PC-9 (cell line): ENCODE measurements at regions of chr17 and their contacts with region 1.

Region 1: DNA sequence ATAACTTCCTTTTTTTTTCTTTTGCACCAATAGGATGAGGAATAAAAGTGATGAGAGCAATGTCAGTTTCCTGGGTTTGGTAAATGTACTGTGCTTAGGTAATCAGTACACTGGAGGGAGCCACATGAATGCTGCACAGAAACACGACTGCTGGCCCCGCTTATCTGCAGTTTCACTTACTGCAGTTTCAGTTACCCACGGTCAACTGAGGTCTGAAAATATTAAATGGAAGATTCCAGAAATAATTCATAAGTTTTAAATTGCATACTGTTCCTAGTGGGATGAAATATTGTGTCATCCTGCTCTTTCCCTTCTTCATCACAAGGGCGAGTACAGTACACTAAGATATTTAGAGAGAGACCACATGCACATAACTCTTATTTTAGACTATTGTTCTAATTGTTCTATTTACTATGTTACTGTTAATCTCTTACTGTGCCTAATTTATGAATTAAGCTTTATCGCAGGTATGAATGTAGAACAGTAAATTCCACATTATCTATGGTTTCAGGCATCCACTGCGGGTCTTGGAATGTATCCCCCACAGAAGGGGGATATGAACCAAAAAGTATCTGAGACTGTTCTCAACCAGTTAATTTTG is 6.4 kb upstream of the LGALS3BP start:
- DNase-seq: no peak
- H3K4me3 ChIP-seq: peak overlapping the region; percentile 48; the same call in 1 of the 2 replicates
- H3K27ac ChIP-seq: peak overlapping the region; percentile 88
- H3K4me1 ChIP-seq: peaks cover 30% of the 10 kb centered on the region
- H3K27me3 ChIP-seq: no peaks in the 10 kb centered on the region
- CTCF ChIP-seq: no peak

Region 2: DNA sequence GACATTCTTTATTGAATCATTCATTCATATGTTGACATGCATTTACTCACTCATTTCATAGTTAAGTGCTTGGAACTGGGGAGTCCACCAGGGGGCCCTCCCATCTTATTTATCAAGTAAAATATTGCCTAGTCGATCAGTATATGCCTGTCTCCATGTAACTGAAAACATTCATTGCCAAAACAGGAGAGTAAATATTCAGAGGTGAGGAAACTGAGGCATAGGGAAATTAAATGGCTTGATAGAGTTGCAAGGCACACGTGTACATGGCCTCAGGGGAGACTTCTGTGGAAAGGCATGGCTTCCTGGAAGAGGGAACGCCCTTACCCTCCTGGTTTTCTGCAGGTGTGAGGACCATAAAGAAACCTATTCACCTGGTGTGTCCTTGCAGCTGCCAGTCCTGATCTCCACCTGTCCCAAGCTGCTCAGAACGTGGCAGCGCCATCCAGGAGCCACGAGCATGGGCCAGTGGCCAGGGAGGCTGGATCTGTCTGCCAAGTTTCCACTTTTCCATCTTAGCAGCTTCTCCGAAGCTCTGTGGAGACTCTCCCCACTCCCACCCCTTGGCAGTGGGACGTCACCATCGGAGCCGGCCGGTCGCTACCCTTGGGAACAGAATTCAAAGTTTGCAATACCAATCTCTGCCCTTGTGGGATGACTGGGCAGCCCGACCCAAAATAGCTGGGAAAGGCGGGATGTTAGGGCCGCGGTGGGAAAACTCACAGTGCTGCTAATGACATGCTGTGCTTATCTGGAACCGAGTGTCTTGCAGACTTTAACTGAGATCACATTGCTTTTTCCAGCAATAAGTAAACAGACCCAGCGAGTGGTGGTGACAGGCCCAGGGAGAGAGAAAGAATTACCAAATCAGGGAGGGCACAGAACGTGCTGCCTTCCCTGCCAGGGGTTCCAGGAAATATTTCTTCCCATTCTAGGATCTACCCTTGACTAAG is 33.8 kb after region 1 on chr17:
- CTCF ChIA-PET with region 1: no interaction called
- POLR2A ChIA-PET with region 1: no interaction called
- intact Hi-C with region 1: loop called (anchors 2 kb)
- DNase-seq: peak; percentile 47 to 49
- H3K4me3 ChIP-seq: no peak overlapping the region
- H3K27ac ChIP-seq: peak overlapping the region; percentile 49; the same call in 1 of the 2 replicates
- H3K4me1 ChIP-seq: peaks cover 50% of the 10 kb centered on the region
- H3K27me3 ChIP-seq: no peaks in the 10 kb centered on the region
- CTCF ChIP-seq: peak; percentile 78

Region 3: DNA sequence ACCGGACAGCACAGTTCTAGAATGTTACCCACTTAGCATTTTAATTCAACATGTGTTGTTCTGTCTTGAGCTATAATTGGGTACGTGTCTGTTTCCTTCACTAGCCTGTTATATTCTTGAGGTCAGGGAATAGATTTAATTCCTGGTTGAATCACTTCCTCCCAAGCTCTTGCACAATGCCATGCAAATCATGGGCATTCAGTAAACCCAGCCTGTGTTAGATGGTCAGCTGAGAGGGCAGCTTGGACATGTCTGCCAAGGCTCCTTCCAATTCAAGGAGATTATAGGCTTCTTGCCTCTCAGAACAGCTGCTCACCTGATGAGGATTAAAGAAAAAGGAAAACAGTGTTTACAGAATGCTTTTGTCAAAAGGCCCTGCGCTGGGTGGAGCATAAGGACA is 50.4 kb after region 1 on chr17:
- CTCF ChIA-PET with region 1: no interaction called
- POLR2A ChIA-PET with region 1: no interaction called
- intact Hi-C with region 1: no loop called
- DNase-seq: peak in 1 of 2 experiments; percentile 77
- H3K4me3 ChIP-seq: no peak overlapping the region
- H3K27ac ChIP-seq: 0 out of 2 replicates have a peak overlapping the region, but pooled peaks have one; percentile 32
- H3K4me1 ChIP-seq: peaks cover 26% of the 10 kb centered on the region
- H3K27me3 ChIP-seq: no peaks in the 10 kb centered on the region
- CTCF ChIP-seq: no peak

Region 4: GRCh38 chr17:79082311-79083190 is 96.4 kb after region 1 on chr17:
- CTCF ChIA-PET with region 1: no interaction called
- POLR2A ChIA-PET with region 1: no interaction called
- intact Hi-C with region 1: loop called (anchors 2 kb)
- DNase-seq: peak in 1 of 2 experiments; percentile 61
- H3K4me3 ChIP-seq: no peak overlapping the region
- H3K27ac ChIP-seq: no peak overlapping the region
- H3K4me1 ChIP-seq: no peaks in the 10 kb centered on the region
- H3K27me3 ChIP-seq: no peaks in the 10 kb centered on the region
- CTCF ChIP-seq: peak; percentile 80